GM13977 (cell line): ENCODE measurements at regions of chr22 and their contacts with region 1.

Region 1: DNA sequence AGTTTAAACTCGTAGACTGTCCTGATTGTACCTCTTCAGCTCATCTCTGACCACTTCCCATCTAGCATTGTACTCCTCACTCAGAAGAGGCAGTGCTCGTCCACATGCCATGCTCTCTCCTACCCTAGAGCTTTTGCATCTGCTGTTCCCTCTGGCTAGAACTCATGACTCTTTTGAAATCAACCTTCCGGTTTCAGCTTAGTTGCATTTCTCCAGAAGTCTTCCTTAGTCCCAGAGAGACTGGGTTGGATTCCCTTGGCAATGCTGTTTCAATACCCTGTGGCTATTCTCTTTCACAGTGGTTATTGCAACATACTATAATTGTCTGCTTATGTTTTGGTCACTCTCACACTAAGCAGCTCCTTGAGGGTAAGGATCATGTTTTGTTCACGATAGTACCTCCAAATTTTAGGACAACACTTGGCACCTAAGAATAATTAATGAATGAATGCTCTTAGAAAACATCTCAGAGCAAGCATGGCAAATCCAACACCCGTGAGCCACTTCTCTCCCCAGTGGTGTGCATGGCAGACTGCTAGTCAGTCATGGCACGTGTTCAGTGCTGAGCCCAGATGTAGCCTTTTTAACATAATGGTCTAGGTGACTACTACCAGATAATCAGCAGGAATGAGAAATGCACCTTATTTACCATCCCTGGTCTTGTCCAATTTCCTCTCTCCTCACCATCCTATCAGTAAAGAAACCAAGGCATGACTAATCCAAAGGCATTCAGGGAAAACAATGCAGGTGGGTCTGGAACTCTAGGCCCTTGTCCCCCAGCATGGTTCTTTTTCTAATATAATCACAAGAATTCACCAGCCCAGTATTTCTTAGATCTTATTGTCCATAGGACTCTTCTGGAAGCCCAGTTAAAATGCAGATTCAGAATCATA is 14.5 kb downstream of the SEPTIN3 start:
- DNase-seq: no peak
- CTCF ChIP-seq: no peak

Region 2: GRCh38 chr22:42079319-42080251 is 95.8 kb after region 1 on chr22 and contains the start of gene SMDT1:
- in situ Hi-C with region 1: loop called (anchors 10 kb)
- DNase-seq: peak; percentile 99
- CTCF ChIP-seq: no peak